PC-9 (cell line): ENCODE measurements at regions of chr21 and their contacts with region 1.

Region 1: GRCh38 chr21:46603228-46603627 is 1.7 kb downstream of the S100B start:
- DNase-seq: peak in 1 of 2 experiments; percentile 20
- H3K4me3 ChIP-seq: no peak overlapping the region
- H3K27ac ChIP-seq: no peak overlapping the region
- H3K4me1 ChIP-seq: no peaks in the 10 kb centered on the region
- H3K27me3 ChIP-seq: no peaks in the 10 kb centered on the region; the same call in 1 of the 2 replicates
- CTCF ChIP-seq: no peak

Region 2: GRCh38 chr21:46635324-46636172 is 32.3 kb after region 1 on chr21 and contains the start of gene PRMT2:
- CTCF ChIA-PET with region 1: interaction called, 14 read pairs
- POLR2A ChIA-PET with region 1: interaction called, 4 read pairs
- intact Hi-C with region 1: no loop called
- DNase-seq: peak; percentile 72 to 97
- H3K4me3 ChIP-seq: peak within 1 kb of the TSS; percentile 96
- H3K27ac ChIP-seq: peak within 1 kb of the TSS; percentile 91
- H3K4me1 ChIP-seq: peaks cover 14% of the 10 kb centered on the region
- H3K27me3 ChIP-seq: no peaks in the 10 kb centered on the region
- CTCF ChIP-seq: no peak
- total RNA-seq, gene PRMT2: 64.5 and 82.0 TPM in 2 replicates

Region 3: DNA sequence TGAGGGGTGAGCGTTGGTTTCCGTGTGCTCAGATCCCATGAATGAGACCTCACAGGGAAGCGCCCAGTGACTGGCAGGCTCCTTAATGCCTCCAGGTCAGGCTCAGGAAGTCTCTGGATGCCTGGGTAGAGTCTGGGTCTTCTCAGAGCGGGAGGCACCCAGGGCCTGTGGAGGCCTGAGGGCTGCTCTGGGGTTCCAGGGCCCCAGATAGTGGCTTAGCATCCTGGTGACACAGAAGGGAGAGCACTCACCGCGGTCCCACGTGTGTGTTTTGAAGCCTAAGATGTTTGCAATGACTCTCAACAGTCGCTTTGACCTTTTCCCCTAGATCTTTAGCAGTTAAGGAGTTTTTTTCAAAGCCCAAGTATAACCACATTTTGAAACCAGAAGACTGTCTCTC is 57.3 kb after region 1 on chr21:
- CTCF ChIA-PET with region 1: no interaction called
- POLR2A ChIA-PET with region 1: no interaction called
- intact Hi-C with region 1: no loop called
- DNase-seq: no peak
- H3K4me3 ChIP-seq: no peak overlapping the region
- H3K27ac ChIP-seq: no peak overlapping the region
- H3K4me1 ChIP-seq: no peaks in the 10 kb centered on the region
- H3K27me3 ChIP-seq: no peaks in the 10 kb centered on the region
- CTCF ChIP-seq: no peak